SK-N-SH (cell line): ENCODE measurements at regions of chr20 and their contacts with region 1.

Region 1: DNA sequence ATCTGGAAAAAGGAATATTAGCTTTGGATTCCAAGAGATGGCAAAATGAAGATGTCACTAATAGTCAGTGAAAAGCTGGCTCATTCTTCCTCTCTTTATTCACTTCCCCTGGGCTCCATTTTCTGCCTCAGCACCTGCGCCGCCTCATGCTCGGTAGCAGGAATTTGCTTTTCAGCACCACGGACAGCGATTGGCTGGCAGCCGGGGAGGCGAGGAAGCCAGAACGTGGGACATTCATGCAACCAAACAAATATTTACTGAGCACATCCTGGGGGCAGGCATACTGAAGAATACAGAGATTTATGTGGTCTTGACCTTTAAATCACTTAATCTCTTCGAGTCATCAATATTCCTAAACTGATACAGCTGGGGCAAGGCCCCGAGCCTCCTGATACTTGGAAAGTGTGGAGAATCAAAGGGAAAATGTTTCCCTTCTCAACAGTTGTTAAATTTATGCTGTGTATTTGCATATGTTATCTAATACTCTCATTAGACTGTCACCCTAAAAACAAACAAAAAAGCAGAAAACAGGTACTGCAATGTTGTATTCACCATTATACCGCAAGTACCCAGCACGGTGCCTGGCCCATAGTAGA is 12.1 kb upstream of the PDYN start:
- DNase-seq: no peak
- H3K4me3 ChIP-seq: no peak overlapping the region
- H3K27ac ChIP-seq: no peak overlapping the region
- H3K4me1 ChIP-seq: no peaks in the 10 kb centered on the region
- H3K27me3 ChIP-seq: no peaks in the 10 kb centered on the region; the same call in 1 of the 2 replicates
- CTCF ChIP-seq: no peak
- EP300 ChIP-seq: no peak
- RAD21 ChIP-seq: no peak

Region 2: DNA sequence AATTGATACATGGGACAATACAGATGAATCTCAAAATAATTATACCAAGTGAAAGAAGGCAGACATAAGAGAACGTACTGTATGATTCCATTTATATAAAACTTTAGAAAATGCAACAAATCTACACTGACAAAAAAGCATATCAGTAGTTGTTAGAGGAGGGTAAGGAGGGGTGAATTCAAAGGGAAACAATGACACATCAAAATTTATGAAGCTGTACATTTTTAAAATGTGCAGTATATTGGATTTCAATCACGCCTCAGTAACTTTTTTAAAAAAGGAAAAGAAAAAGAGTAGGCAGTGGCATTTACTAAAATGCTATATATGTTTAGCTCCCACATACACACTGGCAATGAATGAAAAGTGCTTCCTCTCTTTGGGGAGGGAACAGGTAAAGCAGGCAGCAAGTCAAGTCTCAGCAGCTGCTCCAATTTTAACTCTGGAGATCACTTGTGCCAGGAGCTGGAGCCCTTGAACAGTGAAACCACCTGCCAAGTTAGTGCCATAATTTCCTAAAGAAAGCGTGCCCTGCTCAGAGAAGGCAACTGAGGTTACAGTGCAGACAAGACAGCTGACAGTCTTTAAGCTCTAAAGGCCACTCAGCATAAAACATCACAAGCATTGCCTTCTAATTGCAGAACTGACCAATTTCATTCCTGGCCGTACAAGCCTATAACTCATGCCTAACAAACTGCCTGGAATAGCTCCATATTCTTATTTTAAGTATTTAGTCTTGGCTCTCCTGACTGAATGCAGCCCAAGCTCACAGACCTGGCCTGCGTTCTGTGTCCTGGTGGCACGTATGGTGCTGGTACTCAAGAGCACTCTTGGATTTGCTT is 624.0 kb before region 1 on chr20:
- CTCF ChIA-PET with region 1: no interaction called
- POLR2A ChIA-PET with region 1: no interaction called
- DNase-seq: no peak
- H3K4me3 ChIP-seq: no peak overlapping the region
- H3K27ac ChIP-seq: no peak overlapping the region
- H3K4me1 ChIP-seq: peaks cover 0 to 15% of the 10 kb centered on the region in 2 experiments; a peak in 2 of 4 replicates
- H3K27me3 ChIP-seq: no peaks in the 10 kb centered on the region
- CTCF ChIP-seq: no peak
- EP300 ChIP-seq: no peak
- RAD21 ChIP-seq: no peak

Region 3: DNA sequence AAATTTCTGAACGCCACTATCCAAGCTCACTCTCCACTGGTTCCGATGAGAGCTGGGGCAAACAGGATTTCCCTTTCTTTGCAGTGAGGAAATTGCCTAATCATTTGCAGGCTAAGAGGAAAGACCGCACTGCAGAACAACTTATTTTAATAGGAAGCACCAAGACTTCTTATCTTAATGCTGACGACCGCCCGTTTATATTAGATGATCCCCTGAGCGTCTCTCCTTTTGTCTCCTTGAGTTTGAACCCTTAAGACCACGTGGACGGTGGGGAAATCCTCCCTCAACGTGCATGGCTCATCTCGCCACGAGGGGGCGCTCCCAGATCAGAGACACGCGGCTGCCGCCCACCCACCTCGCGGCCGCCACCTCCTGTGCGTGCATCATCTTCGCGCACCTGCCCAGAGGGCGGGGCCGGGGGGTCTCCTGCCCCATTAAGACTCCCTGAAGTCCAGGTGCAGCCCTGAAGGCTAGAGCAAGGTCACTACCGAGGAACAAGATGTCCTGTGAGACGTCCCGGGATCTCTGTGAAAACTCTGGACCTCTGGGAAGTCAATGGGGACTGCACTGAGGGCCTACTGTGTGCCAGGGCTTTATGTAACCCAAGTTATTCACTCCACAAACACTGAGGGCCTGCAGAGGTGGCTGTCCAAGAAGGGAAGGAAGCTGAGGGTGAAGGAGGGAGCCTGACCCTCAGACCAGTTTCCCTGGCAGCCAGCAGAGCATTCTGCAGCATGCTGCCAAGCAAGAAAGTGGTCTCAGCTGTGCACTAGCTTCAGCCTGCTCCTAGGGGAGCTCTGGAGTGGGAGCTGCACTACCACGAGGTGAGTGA is 40.2 kb before region 1 on chr20:
- CTCF ChIA-PET with region 1: interaction called, 16 read pairs
- POLR2A ChIA-PET with region 1: no interaction called
- DNase-seq: peak; percentile 84
- H3K4me3 ChIP-seq: no peak overlapping the region
- H3K27ac ChIP-seq: no peak overlapping the region
- H3K4me1 ChIP-seq: no peaks in the 10 kb centered on the region; a peak in 1 of 4 replicates
- H3K27me3 ChIP-seq: peaks cover 34% of the 10 kb centered on the region; the same call in 1 of the 2 replicates
- CTCF ChIP-seq: peak; percentile 93
- EP300 ChIP-seq: no peak
- RAD21 ChIP-seq: peak; percentile 79

Region 4: DNA sequence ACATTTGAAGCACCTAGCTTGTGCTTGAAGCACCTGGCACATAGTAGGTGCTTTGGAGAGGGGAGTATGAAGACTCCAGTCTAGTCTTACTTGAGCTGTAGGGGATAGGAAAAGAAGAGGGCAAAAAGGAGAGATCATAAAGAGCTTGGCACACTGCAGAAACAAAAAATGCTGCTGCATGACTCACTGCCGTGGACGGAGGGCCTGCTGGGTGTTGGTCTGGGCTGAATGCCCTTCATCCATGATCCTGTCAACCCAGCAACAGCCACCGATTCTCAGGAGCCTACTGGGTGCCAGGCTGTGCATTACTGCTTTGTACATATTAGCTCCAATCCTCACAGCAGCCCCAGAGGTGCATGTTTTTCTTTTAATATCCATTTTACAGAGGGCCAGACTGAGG is 18.1 kb before region 1 on chr20:
- CTCF ChIA-PET with region 1: interaction called, 20 read pairs
- POLR2A ChIA-PET with region 1: no interaction called
- DNase-seq: no peak
- H3K4me3 ChIP-seq: no peak overlapping the region
- H3K27ac ChIP-seq: no peak overlapping the region
- H3K4me1 ChIP-seq: no peaks in the 10 kb centered on the region
- H3K27me3 ChIP-seq: peaks cover 43% of the 10 kb centered on the region
- CTCF ChIP-seq: no peak
- EP300 ChIP-seq: no peak
- RAD21 ChIP-seq: no peak

Region 5: GRCh38 chr20:2032155-2032554 is 26.2 kb after region 1 on chr20:
- CTCF ChIA-PET with region 1: interaction called, 37 read pairs
- POLR2A ChIA-PET with region 1: no interaction called
- DNase-seq: no peak
- H3K4me3 ChIP-seq: no peak overlapping the region
- H3K27ac ChIP-seq: no peak overlapping the region
- H3K4me1 ChIP-seq: no peaks in the 10 kb centered on the region
- H3K27me3 ChIP-seq: peaks cover 13% of the 10 kb centered on the region
- CTCF ChIP-seq: no peak
- EP300 ChIP-seq: no peak
- RAD21 ChIP-seq: no peak

Region 6: DNA sequence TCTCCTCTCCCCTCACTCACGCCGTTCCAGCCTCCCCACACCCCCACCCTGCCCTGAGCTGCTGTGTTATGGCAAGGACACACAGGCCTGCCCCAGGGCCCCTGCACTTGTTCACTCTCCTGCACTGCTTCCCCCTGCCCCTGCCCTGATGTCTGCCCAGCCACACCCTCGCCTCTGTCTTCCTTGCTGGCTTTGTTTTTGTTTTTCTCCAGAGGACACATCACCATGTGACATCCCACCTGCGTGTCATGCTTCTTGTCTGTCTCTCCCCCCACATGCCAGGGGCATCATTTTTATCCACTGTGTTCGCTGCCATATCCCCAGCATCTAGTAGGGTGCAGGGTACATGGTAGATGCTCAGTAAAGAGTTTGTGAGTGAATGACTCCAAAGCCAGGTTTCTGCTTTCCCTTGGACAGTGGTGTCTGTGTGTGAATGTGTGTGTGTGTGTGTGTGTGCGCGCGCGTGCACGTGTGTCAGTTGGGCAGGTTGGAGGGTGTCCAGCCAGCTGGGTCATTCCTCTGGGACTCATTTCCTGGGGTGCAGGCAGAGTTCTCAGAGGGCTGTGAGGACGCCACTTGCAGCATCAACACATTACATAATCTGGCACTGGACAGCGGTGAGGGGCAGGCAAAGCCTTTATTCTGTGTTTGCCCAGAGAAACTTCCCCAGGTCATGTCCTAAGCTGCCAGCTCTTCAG is 156.3 kb after region 1 on chr20:
- CTCF ChIA-PET with region 1: interaction called, 13 read pairs
- POLR2A ChIA-PET with region 1: no interaction called
- DNase-seq: no peak
- H3K4me3 ChIP-seq: no peak overlapping the region
- H3K27ac ChIP-seq: no peak overlapping the region
- H3K4me1 ChIP-seq: no peaks in the 10 kb centered on the region
- H3K27me3 ChIP-seq: no peaks in the 10 kb centered on the region
- CTCF ChIP-seq: no peak
- EP300 ChIP-seq: no peak
- RAD21 ChIP-seq: no peak